Endothelial cell of umbilical vein (primary cell): ENCODE measurements at regions of chr1 and their contacts with region 1.

Region 1: GRCh38 chr1:110209715-110210603 is at the start of gene KCNC4:
- DNase-seq: peak; percentile 81
- H3K4me3 ChIP-seq: peak within 1 kb of the TSS; percentile 43 to 65 (median 61)
- H3K27ac ChIP-seq: no peak within 1 kb of the TSS
- H3K4me1 ChIP-seq: peaks cover 5% of the 10 kb centered on the region
- H3K27me3 ChIP-seq: peaks cover 0 to 6% of the 10 kb centered on the region in 2 experiments
- CTCF ChIP-seq: no peak
- POLR2A ChIP-seq: no peak
- total RNA-seq, gene KCNC4: 12.3 and 22.5 TPM in 2 replicates

Region 2: DNA sequence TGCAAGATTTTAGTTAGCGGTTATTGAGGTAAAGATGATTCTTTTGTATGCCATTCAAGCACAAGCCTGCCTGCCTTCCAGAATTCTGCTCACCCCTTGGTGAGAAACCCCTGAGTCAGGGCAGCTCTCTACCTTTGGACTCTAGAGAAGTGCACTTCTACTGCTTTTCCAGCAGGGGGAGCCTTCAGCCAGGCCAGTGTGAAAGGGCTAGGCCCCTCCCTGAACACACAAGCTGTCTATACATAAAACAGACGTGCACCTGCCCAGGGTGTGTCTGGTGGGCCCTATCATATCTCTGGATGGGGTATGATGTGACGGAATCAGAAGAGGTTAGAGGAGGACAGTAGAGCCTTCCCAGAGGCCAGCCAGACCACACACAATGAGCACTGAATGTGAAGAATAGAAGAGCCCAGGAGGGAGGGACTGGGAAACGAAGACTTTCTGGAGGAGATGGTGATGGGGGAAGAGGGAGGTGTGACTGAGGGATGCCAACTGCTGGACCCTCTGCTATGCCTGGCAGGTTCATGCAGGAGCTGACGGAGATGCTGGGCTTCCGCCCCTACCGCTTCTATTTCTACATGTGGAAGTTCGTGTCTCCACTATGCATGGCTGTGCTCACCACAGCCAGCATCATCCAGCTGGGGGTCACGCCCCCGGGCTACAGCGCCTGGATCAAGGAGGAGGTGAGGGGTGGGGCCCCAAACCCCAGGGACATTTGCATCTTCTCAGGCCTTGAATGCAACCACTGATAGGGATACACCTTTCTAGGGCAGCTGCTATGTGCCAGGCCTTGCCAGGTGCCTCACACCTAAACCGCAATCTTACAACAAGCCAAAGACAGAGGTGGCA is 12.8 kb before region 1 on chr1:
- CTCF ChIA-PET with region 1: interaction called, 53 read pairs
- POLR2A ChIA-PET with region 1: no interaction called
- dilution Hi-C with region 1: no loop called
- intact Hi-C with region 1: no loop called
- DNase-seq: peak; percentile 34
- H3K4me3 ChIP-seq: no peak overlapping the region
- H3K27ac ChIP-seq: no peak overlapping the region
- H3K4me1 ChIP-seq: no peaks in the 10 kb centered on the region
- H3K27me3 ChIP-seq: no peaks in the 10 kb centered on the region
- CTCF ChIP-seq: peak; percentile 75 to 92
- POLR2A ChIP-seq: no peak

Region 3: DNA sequence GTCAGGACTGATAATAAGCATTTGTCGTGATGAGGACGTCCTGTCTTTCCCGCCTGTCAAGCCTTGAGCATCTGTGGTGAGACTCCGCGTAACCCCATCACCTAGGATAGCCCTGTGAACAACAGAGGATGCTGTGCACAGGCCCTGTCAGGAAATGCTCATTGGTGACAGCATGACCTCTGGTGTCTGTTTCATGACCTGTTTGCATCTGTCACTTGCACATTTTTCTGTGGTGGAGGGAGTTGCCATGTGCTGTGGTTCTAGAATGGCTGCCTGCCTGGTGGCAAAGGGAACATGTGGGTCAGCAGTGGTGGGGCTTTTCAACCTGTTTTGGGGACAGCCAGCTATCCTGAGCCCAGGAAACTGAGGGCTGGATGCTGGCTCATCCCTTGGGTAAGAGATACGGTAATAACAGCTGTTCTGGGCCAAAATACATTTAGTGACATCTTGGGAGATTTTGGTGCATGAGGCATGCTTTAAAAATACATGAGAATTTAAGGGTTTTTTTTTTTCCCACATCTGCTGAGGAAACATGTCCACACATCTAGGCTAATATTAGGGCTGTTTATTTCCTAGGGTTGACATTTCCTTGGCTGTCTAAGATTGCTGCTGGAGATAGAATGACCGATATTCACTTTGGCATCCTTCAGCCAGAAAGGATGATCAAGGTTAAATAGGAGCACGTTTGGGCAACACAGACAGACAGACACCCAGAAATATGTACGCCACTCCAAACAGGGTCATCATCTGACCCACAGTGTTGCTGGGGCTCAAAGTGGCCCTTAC is 53.1 kb after region 1 on chr1:
- CTCF ChIA-PET with region 1: interaction called, 6 read pairs
- POLR2A ChIA-PET with region 1: no interaction called
- dilution Hi-C with region 1: no loop called
- intact Hi-C with region 1: loop called (anchors 10 kb)
- DNase-seq: no peak
- H3K4me3 ChIP-seq: no peak overlapping the region
- H3K27ac ChIP-seq: no peak overlapping the region
- H3K4me1 ChIP-seq: peaks cover 11% of the 10 kb centered on the region
- H3K27me3 ChIP-seq: no peaks in the 10 kb centered on the region
- CTCF ChIP-seq: no peak
- POLR2A ChIP-seq: no peak

Region 4: GRCh38 chr1:110312188-110313121 is 102.5 kb after region 1 on chr1:
- CTCF ChIA-PET with region 1: interaction called, 1,577 read pairs
- POLR2A ChIA-PET with region 1: interaction called, 9 read pairs
- dilution Hi-C with region 1: no loop called
- intact Hi-C with region 1: loop called (anchors 1 kb)
- DNase-seq: peak; percentile 70
- H3K4me3 ChIP-seq: no peak overlapping the region
- H3K27ac ChIP-seq: no peak overlapping the region
- H3K4me1 ChIP-seq: no peaks in the 10 kb centered on the region
- H3K27me3 ChIP-seq: no peaks in the 10 kb centered on the region
- CTCF ChIP-seq: peak; percentile 88 to 96
- POLR2A ChIP-seq: no peak

Region 5: DNA sequence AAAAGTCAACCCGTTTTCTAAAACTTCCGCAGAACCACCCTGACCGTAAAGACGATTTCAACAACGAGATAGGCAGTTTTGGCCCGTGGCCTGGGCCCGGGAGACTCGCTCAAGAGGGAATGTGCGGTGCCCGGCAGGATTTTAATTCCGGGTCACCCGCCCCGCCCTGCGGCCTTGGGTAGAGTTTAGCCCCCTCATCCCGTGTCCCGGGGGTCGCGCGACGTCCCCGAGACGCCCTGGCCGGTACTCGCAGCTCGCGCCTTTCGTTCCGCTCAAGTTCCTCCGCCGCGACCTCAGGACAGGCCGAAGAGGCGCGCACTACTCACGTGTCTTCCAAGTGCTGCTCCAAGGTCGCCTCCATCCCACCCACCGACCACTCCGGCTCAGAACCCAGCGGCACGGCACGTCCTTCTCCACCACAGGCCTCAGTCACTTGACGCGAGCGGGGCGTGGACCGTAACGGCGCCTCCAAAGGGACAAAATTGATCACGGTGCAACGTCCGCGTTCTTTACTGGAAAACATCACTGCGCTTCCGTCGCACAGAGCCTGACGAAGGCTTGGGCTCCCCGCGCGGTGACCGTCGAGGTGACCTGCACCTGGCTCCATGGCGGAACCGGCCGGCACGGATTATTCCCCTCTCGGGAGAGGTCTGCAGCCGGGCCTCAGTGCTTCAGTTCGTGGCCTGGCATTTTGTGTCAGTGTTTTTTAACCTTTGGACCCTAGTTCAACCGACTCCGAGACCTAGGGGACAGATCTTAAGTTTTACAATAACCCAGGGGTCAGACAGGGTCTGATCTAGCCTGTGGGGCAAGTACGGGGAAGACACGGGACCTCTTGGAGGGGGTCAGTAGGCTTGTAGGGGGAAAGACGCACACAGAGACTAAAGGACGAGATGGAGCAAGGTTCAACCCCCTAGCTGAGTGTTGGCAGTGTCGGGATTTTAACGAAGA is 197.6 kb after region 1 on chr1 and contains the start of gene LAMTOR5:
- CTCF ChIA-PET with region 1: interaction called, 22 read pairs
- POLR2A ChIA-PET with region 1: no interaction called
- dilution Hi-C with region 1: no loop called
- intact Hi-C with region 1: no loop called
- DNase-seq: peak; percentile 97
- H3K4me3 ChIP-seq: peak within 1 kb of the TSS; percentile 94 to 100 (median 95)
- H3K27ac ChIP-seq: peak within 1 kb of the TSS; percentile 69
- H3K4me1 ChIP-seq: peaks cover 9% of the 10 kb centered on the region
- H3K27me3 ChIP-seq: no peaks in the 10 kb centered on the region
- CTCF ChIP-seq: no peak
- POLR2A ChIP-seq: peak; percentile 92
- total RNA-seq, gene LAMTOR5: 137 and 150 TPM in 2 replicates

Region 6: DNA sequence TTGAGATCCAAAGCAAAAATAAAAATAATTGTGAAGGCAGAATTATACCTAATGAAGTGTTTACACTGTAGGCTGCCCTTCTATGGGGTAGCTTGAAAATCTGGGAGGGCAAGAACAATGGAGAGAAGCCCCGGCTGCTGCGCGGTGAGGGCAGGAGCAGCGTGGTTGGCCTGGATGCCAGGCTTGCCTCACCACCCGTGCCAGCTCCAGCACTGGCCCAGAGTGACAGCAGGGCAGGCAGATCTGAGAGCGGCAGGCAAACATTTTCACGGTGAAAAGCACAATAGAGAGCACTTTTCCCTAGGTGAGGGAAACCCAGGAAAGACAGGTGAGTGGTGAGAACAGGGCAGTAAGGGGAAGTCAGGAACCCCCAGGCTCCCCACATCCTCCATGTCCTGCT is 242.4 kb after region 1 on chr1:
- CTCF ChIA-PET with region 1: interaction called, 17 read pairs
- POLR2A ChIA-PET with region 1: no interaction called
- dilution Hi-C with region 1: no loop called
- intact Hi-C with region 1: no loop called
- DNase-seq: no peak
- H3K4me3 ChIP-seq: no peak overlapping the region
- H3K27ac ChIP-seq: no peak overlapping the region
- H3K4me1 ChIP-seq: no peaks in the 10 kb centered on the region
- H3K27me3 ChIP-seq: peaks cover 26 to 32% of the 10 kb centered on the region in 2 experiments
- CTCF ChIP-seq: no peak
- POLR2A ChIP-seq: no peak